ENCODE measurements at regions of chr18 and their contacts with region 1.

Region 1: GRCh38 chr18:63439334-63439733 is 17.1 kb upstream of the VPS4B start:
- DNase-seq: no peak
- ATAC-seq: peak; percentile 64 to 90 (median 72)
- H3K4me3 ChIP-seq: no peak overlapping the region
- H3K27ac ChIP-seq: no peak overlapping the region
- H3K4me1 ChIP-seq: no peaks in the 10 kb centered on the region
- H3K27me3 ChIP-seq: no peaks in the 10 kb centered on the region
- CTCF ChIP-seq: peak; percentile 81

Region 2: DNA sequence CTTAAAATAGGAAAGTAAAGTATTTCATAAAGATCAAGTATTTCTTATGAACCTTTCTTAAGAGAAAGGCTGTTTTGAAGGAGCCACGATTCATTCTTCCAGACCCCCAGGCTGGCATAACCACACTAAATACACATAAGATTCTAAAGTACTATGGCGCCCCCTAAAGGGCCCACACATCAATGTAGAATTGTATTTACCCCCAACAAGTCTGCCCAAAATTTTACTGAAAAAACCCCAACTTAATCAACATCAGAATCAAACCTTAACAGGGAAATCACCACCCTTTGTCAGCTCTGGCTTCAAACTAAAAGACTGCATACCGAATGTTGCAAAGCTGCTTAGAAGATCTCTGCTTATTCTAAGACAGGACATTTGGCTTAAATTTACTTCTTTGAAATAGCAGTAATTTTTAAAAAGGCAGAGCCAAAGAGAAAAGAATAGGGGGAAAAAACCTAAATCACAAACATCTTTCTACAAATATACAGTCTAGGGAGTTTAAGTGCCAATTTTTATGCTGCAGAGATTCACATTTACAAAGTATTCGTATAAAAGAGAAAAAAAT is 99.3 kb before region 1 on chr18:
- intact Hi-C with region 1: loop called in 1 of 2 experiments (anchors 5 kb)
- DNase-seq: no peak
- ATAC-seq: no peak
- H3K4me3 ChIP-seq: no peak overlapping the region
- H3K27ac ChIP-seq: no peak overlapping the region
- H3K4me1 ChIP-seq: peaks cover 5% of the 10 kb centered on the region
- H3K27me3 ChIP-seq: no peaks in the 10 kb centered on the region
- CTCF ChIP-seq: peak; percentile 48

Region 3: GRCh38 chr18:63378919-63379638 is 60.3 kb before region 1 on chr18:
- intact Hi-C with region 1: no loop called
- DNase-seq: no peak
- ATAC-seq: no peak
- H3K4me3 ChIP-seq: no peak overlapping the region
- H3K27ac ChIP-seq: no peak overlapping the region
- H3K4me1 ChIP-seq: no peaks in the 10 kb centered on the region
- H3K27me3 ChIP-seq: no peaks in the 10 kb centered on the region
- CTCF ChIP-seq: no peak

Region 4: GRCh38 chr18:63539904-63540510 is 100.7 kb after region 1 on chr18:
- intact Hi-C with region 1: no loop called
- DNase-seq: no peak
- ATAC-seq: no peak
- H3K4me3 ChIP-seq: no peak overlapping the region
- H3K27ac ChIP-seq: no peak overlapping the region
- H3K4me1 ChIP-seq: no peaks in the 10 kb centered on the region
- H3K27me3 ChIP-seq: peaks cover 0 to 2% (median 0%) of the 10 kb centered on the region in 3 donors
- CTCF ChIP-seq: no peak